A673 (cell line): ENCODE measurements at regions of chr12 and their contacts with region 1.

Region 1: DNA sequence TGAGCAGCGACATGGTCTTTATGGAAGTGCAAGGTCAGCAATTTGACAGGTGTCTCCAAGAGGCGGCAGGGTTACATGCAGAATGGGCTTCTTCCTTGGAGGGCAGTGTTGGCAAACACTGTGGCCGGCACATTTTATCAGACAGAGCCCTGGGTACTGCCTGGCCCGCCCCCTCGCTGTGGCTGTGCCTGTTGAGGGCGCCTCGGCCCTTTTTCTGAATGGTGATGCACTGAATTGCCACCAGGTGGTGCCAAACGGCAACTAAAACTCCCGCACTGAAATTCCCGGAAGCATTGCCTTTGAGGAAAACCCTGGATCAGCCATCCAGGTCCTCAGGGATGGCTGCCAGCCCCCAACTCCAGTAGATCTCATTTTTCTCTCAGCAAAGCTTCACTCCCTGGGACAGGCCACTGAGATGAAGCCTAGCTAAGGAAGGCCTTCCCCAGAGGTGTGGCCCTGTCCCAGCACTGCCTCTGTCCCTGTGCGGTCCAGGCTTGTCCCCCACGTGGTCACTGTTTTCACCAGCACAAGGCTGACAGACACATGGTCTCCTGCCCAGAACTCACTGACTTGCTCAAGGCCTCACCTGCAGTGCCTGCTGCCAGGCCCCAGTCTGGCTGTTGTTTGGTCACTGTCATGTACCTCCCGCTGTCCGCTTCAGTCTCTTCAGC is 73.6 kb downstream of the TESC start:
- DNase-seq: peak; percentile 77
- H3K4me3 ChIP-seq: no peak overlapping the region
- H3K27ac ChIP-seq: no peak overlapping the region
- H3K4me1 ChIP-seq: no peaks in the 10 kb centered on the region
- H3K27me3 ChIP-seq: no peaks in the 10 kb centered on the region
- CTCF ChIP-seq: peak; percentile 88

Region 2: GRCh38 chr12:116703214-116703795 is 322.3 kb before region 1 on chr12:
- CTCF ChIA-PET with region 1: no interaction called
- POLR2A ChIA-PET with region 1: no interaction called
- intact Hi-C with region 1: loop called (anchors 10 kb)
- DNase-seq: peak; percentile 63
- H3K4me3 ChIP-seq: no peak overlapping the region
- H3K27ac ChIP-seq: no peak overlapping the region
- H3K4me1 ChIP-seq: peaks cover under 1% of the 10 kb centered on the region
- H3K27me3 ChIP-seq: no peaks in the 10 kb centered on the region
- CTCF ChIP-seq: peak; percentile 92

Region 3: DNA sequence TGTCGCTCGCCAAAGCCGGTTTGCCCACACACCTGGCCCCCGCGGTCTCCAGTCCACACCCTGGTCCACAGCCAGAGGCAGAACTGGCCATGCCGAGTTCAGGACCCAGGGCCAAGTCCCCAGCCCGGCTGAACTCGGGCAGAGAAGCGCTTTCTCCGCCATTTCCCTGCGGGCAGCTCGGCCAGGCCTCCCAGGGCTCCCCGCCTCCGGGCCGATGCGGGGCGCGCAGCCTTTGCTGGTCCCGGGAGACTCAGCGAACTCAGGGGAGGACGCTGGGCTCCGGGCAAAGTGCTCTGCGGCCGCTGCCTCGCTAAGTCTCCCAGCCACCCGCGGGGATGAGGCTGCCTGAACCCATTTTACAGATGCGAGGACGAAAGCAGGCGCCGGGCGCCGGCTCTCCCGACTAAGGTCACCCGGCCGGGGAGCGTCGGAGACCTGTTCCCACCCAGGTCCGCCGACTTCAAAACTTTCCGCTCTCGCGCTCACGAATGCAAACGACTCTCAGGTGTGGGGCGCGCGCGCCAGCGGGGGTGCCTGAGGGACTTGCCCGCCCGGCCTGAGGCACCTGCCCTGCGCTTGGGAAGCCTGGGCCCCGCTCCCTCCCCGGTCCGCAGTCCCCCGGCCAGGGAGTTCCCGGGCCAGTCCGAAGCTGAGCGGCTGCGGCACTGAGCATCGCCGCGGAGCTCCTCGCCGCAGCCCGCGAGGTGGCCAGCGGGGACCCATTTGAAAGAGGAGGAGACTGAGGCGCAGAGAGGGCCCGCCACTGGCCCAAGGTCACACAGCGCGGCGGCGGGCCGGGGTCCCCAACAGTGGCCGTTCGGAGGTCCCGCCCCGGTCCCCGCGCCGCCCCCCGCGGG is 73.0 kb after region 1 on chr12:
- CTCF ChIA-PET with region 1: no interaction called
- POLR2A ChIA-PET with region 1: no interaction called
- intact Hi-C with region 1: no loop called
- DNase-seq: no peak
- H3K4me3 ChIP-seq: peak overlapping the region; percentile 54
- H3K27ac ChIP-seq: no peak overlapping the region
- H3K4me1 ChIP-seq: peaks cover 10% of the 10 kb centered on the region
- H3K27me3 ChIP-seq: peaks cover 77% of the 10 kb centered on the region
- CTCF ChIP-seq: no peak

Region 4: GRCh38 chr12:117119592-117120198 is 94.1 kb after region 1 on chr12:
- CTCF ChIA-PET with region 1: no interaction called
- POLR2A ChIA-PET with region 1: no interaction called
- intact Hi-C with region 1: loop called (anchors 1 kb)
- DNase-seq: peak; percentile 42
- H3K4me3 ChIP-seq: no peak overlapping the region
- H3K27ac ChIP-seq: no peak overlapping the region
- H3K4me1 ChIP-seq: no peaks in the 10 kb centered on the region
- H3K27me3 ChIP-seq: no peaks in the 10 kb centered on the region
- CTCF ChIP-seq: peak; percentile 80

Region 5: GRCh38 chr12:117139025-117139717 is 113.6 kb after region 1 on chr12:
- CTCF ChIA-PET with region 1: no interaction called
- POLR2A ChIA-PET with region 1: no interaction called
- intact Hi-C with region 1: loop called (anchors 5 kb)
- DNase-seq: no peak
- H3K4me3 ChIP-seq: no peak overlapping the region
- H3K27ac ChIP-seq: no peak overlapping the region
- H3K4me1 ChIP-seq: no peaks in the 10 kb centered on the region
- H3K27me3 ChIP-seq: no peaks in the 10 kb centered on the region
- CTCF ChIP-seq: no peak

Region 6: GRCh38 chr12:117155278-117156060 is 129.9 kb after region 1 on chr12:
- CTCF ChIA-PET with region 1: no interaction called
- POLR2A ChIA-PET with region 1: no interaction called
- intact Hi-C with region 1: loop called (anchors 1 kb)
- DNase-seq: peak; percentile 51
- H3K4me3 ChIP-seq: no peak overlapping the region
- H3K27ac ChIP-seq: no peak overlapping the region
- H3K4me1 ChIP-seq: no peaks in the 10 kb centered on the region
- H3K27me3 ChIP-seq: no peaks in the 10 kb centered on the region
- CTCF ChIP-seq: peak; percentile 82

Region 7: GRCh38 chr12:117408161-117408791 is 382.7 kb after region 1 on chr12:
- CTCF ChIA-PET with region 1: no interaction called
- POLR2A ChIA-PET with region 1: no interaction called
- intact Hi-C with region 1: no loop called
- DNase-seq: peak; percentile 54
- H3K4me3 ChIP-seq: no peak overlapping the region
- H3K27ac ChIP-seq: no peak overlapping the region
- H3K4me1 ChIP-seq: peaks cover 11% of the 10 kb centered on the region
- H3K27me3 ChIP-seq: no peaks in the 10 kb centered on the region
- CTCF ChIP-seq: no peak

Region 8: DNA sequence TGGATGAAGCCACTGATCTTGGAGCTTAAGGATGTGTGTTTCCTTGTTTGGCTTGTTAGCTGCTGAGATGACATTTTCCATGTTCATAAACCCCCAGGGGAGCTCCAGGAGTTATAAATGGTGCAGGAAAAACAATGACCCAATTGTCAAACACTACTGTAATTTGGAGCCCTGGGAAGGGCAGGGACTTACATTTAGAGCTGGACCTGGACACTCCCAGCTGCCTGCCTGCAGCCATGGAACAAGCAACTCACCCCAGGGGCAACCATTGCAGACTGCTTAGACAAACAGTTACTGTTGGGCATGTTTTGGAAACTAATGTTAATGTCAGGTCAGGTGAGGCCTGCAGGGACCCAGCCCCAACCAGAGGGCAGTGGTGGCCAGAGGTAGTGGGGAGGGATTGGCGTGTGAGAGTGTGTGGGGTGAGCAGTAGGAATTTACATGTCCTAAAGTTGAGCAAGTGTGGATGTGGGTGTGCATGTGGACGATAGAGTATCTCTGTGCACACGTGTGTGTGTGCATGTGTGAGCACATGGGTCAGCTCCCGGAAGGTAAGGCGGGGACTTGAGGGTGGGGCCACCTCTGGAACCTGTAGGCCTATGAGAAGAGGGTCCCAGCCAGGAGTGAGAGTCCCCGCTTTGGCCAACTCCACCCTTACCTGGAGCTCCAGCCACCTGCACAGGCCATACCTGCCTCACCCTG is 422.2 kb after region 1 on chr12:
- CTCF ChIA-PET with region 1: no interaction called
- POLR2A ChIA-PET with region 1: no interaction called
- intact Hi-C with region 1: no loop called
- DNase-seq: no peak
- H3K4me3 ChIP-seq: no peak overlapping the region
- H3K27ac ChIP-seq: no peak overlapping the region
- H3K4me1 ChIP-seq: no peaks in the 10 kb centered on the region
- H3K27me3 ChIP-seq: no peaks in the 10 kb centered on the region
- CTCF ChIP-seq: no peak

Region 9: DNA sequence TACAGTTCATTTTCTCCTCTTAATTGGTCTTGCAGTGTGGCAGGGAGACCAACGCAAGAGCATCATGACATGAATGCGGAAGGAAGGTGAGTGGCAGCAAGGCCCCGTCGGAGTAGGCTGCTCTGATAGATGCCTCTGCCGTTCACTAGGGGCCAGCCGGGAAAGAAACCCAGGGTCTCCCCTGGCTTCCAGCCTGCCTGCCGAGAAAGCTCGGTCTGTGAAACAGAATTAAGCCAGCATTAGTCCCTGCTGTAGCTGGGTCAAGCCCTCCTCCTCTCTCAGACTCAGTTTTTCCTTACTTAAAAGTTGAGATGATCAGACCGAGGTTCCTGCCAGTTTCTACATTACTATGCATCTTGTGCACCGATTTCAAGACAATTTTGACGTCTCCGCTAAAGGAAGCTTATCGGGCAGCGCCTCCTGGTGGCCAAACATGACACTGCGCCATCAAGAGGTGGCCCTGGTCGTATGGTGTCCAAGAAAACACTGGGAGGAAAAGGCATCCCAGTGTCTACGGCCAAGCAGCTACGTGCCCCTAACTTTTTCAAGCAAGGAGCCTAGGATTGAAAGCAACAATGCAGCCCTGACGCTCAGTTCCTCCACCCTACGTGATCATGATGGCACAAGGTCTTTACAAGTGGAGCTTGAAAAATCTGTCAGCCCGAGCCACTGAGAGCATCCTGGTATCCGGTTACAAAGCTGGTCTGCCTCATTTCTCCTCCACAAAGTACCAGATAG is 811.6 kb after region 1 on chr12:
- CTCF ChIA-PET with region 1: no interaction called
- POLR2A ChIA-PET with region 1: no interaction called
- intact Hi-C with region 1: loop called (anchors 1 kb)
- DNase-seq: peak; percentile 82
- H3K4me3 ChIP-seq: no peak overlapping the region
- H3K27ac ChIP-seq: no peak overlapping the region
- H3K4me1 ChIP-seq: no peaks in the 10 kb centered on the region
- H3K27me3 ChIP-seq: peaks cover 34% of the 10 kb centered on the region
- CTCF ChIP-seq: peak; percentile 99